ENCODE measurements at regions of chr2 and their contacts with region 1.

Region 1: DNA sequence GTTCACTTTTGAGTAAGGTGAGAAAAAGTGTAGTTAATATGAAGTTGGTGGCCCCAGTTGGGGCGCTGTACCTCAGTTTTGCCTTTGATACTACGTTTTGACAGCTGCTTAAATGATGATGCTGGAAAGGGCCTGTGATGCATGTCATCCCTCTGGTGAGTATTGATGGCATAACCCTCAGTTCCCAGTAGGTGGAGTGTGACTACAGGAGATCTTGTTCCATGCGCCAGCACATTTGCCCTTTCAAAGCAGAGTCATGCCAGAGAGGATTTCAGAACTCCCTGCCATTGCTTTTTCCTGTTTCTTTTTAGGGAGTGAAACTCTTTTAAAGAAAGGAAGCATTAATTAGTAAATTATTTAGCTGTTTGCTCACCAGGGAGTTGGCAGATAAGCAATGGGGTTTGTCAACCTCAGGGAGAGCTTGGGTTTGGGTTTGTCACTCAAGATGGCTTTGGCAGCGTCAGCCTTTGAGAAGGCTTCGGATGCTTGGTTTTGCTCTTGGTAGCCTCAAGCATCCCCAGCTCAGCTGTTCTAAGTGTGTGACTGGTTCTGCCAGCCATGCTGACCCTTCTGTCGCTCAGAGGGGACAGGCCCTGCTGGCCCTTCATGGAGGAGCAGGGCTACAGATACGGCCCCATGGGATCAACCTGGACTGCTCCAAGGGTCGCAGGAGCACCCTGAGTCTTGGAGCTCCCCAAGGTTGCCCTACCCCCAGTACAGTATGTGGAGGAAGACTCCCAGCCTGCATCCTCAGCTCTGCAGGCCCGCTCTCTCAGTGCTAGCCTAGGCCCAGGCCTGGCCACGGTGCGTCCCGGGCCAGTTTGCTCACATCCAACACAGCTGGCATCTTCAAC is 29.1 kb downstream of the ARMC9 start:
- DNase-seq: peak; percentile 83
- CTCF ChIP-seq: peak; percentile 74

Region 2: GRCh38 chr2:231047274-231047922 is 180.1 kb before region 1 on chr2:
- CTCF ChIA-PET with region 1: no interaction called
- POLR2A ChIA-PET with region 1: no interaction called
- DNase-seq: no peak
- CTCF ChIP-seq: no peak

Region 3: DNA sequence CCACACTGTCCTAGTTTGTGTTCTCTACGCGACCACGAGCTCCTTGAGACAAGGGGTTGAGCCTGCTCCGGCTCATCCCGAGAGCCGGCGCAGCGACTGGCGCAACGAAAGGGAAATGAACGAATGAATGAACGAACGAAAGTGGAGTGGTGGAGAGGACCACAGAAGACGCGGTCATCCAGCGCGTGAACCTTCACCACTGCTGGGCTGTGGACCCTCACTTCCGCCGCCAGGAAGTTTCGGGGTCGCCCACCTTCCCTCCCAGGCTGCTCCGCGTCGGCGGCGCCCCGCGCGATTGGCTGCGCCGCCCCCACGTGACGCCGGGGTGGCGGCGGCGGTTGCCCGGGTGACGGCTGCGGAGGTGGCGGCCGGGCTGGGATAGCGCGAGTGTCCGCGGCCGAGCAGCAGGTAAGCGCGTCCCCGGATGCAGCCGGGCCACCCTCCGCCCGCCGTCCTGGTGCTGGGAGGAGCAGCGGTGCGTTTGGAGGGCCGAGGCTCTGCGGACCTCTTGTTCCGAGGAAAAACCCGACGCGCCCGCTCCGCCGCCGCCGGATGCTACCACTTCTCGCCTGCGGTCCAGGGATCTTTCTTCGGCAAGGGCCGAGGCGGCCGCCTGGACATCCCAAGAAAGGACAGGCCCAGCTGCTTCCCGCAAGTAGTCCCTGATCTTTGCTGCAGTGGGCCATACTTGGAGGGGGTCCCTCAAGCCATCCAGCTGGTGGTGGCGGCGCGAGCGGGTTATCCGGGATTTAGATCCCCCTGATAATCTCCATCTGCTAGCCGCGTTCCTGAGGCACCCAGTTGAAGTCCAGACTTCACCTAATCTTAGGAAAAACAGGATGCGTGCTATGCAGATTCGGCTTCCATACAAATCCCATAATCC is 29.0 kb before region 1 on chr2 and contains the start of gene ARMC9:
- CTCF ChIA-PET with region 1: interaction called, 16 read pairs
- POLR2A ChIA-PET with region 1: interaction called, 3 read pairs
- DNase-seq: peak; percentile 96
- CTCF ChIP-seq: no peak

Region 4: GRCh38 chr2:231245253-231246094 is 17.9 kb after region 1 on chr2:
- CTCF ChIA-PET with region 1: interaction called, 11 read pairs
- POLR2A ChIA-PET with region 1: interaction called, 7 read pairs
- DNase-seq: no peak
- CTCF ChIP-seq: no peak

Region 5: GRCh38 chr2:231399853-231400680 is 172.5 kb after region 1 on chr2:
- CTCF ChIA-PET with region 1: interaction called, 152 read pairs
- POLR2A ChIA-PET with region 1: no interaction called
- DNase-seq: no peak
- CTCF ChIP-seq: no peak

Region 6: DNA sequence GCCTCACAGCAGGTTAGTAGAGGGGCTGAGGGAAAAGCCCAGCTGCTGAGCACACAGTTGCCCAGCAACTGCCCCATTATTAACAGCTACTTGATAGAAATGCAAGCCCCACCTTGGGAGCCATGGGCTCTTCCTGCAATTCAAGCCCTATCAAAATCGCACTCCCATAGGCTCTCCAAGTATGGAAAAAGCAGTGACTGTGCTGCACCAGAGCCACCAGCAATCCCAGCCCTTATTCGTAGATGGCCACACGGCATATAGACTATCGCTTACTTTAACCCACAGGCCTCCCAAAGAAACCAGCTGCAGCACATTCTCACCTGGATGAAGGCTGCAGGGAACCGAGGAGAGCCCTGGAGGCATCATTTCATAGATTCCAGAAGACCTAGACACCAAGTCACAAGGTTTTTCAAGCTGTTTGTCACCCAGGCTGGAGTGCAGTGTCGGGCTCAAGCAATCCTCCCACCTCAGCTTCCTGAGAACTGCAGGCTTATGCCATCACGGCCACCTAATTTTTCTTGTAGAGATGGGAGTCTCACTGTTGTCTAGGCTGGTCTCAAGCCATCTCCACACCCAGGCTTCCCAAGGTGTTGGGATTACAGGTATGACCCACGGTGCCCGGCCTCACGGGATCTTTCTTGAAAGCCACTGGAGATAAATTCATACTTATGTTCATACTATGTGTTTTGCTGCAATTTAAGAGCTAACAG is 225.4 kb after region 1 on chr2:
- CTCF ChIA-PET with region 1: interaction called, 28 read pairs
- POLR2A ChIA-PET with region 1: interaction called, 3 read pairs
- DNase-seq: no peak
- CTCF ChIP-seq: no peak

Measured in GM10248 (cell line).